Activated CD4-positive, alpha-beta T cell treated with anti-CD3 and anti-CD28 coated beads for 36 hours (primary cell): ENCODE measurements at regions of chr2 and their contacts with region 1.

Region 1: GRCh38 chr2:179440642-179441251 is 176.1 kb upstream of the SESTD1 start:
- DNase-seq: no peak
- ATAC-seq: no peak
- H3K4me3 Mint-ChIP-seq: no peak overlapping the region
- H3K27ac Mint-ChIP-seq: no peak overlapping the region
- H3K4me1 Mint-ChIP-seq: no peaks in the 10 kb centered on the region
- H3K27me3 Mint-ChIP-seq: peaks cover 13% of the 10 kb centered on the region

Region 2: GRCh38 chr2:178761759-178762371 is 678.9 kb before region 1 on chr2:
- CTCF ChIA-PET with region 1: interaction called, 4 read pairs
- POLR2A ChIA-PET with region 1: no interaction called
- intact Hi-C with region 1: loop called (anchors 5 to 10 kb)
- DNase-seq: peak; percentile 44
- ATAC-seq: peak; percentile 66
- H3K4me3 Mint-ChIP-seq: no peak overlapping the region
- H3K27ac Mint-ChIP-seq: no peak overlapping the region
- H3K4me1 Mint-ChIP-seq: no peaks in the 10 kb centered on the region
- H3K27me3 Mint-ChIP-seq: no peaks in the 10 kb centered on the region

Region 3: DNA sequence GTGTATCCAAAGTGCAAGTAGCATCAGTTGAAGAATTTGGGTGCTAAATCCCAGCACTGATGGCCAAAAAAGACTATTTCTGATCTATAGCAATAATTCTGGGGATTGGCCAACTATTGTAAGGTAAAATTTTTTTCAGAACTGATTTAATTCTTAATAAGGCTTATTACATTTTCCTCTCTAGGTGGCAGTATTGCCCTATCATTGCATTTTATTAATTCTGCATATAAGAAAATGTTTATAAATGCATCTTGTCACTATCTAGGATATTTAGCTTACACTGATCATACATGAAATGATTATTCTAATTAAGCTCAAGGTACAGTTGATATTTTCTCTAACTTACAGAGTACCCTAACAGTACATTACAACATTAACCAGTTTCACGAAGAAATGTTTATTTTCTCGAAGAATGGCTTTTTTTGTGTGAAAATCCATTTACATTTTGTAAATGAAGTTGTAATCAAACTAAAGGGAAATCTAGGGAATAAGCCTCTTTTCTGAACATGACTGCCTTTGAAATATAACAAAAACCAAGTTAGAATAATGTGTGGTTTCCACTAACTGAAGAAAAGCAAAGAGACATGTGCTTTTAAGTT is 644.6 kb before region 1 on chr2:
- CTCF ChIA-PET with region 1: no interaction called
- POLR2A ChIA-PET with region 1: no interaction called
- intact Hi-C with region 1: loop called (anchors 1 to 10 kb)
- DNase-seq: no peak
- ATAC-seq: no peak
- H3K4me3 Mint-ChIP-seq: no peak overlapping the region
- H3K27ac Mint-ChIP-seq: no peak overlapping the region
- H3K4me1 Mint-ChIP-seq: no peaks in the 10 kb centered on the region
- H3K27me3 Mint-ChIP-seq: no peaks in the 10 kb centered on the region

Region 4: DNA sequence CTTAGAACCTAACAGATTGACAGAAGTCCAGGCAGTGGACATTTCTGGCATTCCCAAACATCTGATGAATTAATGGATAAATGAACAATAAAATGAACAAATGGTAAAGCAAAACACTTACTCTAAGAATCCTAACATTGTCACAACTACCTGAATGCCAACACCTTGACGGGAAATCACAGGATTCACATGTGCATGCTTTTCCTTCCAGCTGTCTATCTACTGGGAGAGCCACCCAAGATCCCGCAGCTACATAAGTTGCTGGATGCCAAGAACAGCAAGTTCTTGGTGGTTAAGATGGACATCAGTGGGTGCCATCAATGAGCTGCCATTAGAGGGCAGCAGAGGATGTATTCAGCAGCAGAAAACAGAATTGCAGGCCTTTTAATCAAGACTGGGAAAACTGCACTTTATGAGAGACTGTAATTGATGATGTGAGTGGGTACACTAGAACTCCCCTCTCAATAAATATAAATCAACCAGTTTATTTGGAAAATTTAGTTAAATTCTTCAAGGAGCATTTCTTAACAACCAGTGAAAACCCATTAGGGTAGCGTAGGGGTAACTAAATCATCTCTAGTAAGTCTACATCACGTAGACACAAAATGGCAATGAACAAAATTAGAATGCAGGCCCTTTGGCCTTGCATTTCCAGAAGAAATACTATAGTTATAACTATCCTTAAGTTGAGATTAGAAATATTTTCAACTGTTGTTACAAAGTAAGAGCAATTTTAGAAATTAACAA is 221.7 kb before region 1 on chr2:
- CTCF ChIA-PET with region 1: interaction called, 4 read pairs
- POLR2A ChIA-PET with region 1: no interaction called
- intact Hi-C with region 1: loop called (anchors 1 kb)
- DNase-seq: peak; percentile 72
- ATAC-seq: peak; percentile 69
- H3K4me3 Mint-ChIP-seq: no peak overlapping the region
- H3K27ac Mint-ChIP-seq: no peak overlapping the region
- H3K4me1 Mint-ChIP-seq: no peaks in the 10 kb centered on the region
- H3K27me3 Mint-ChIP-seq: no peaks in the 10 kb centered on the region

Region 5: GRCh38 chr2:179422037-179422643 is 18.6 kb before region 1 on chr2:
- CTCF ChIA-PET with region 1: interaction called, 22 read pairs
- POLR2A ChIA-PET with region 1: no interaction called
- intact Hi-C with region 1: no loop called
- DNase-seq: peak; percentile 77
- ATAC-seq: peak; percentile 60
- H3K4me3 Mint-ChIP-seq: no peak overlapping the region
- H3K27ac Mint-ChIP-seq: no peak overlapping the region
- H3K4me1 Mint-ChIP-seq: no peaks in the 10 kb centered on the region
- H3K27me3 Mint-ChIP-seq: peaks cover 7% of the 10 kb centered on the region